Head of caudate nucleus (tissue), 42 donors: ENCODE measurements at regions of chr11 and their contacts with region 1.

Region 1: GRCh38 chr11:67482825-67483798 is at the start of gene AIP:
- DNase-seq: peak; percentile 92 to 99 (median 97)

Region 2: GRCh38 chr11:67401495-67402191 is 81.5 kb before region 1 on chr11 and contains the start of gene PPP1CA:
- intact Hi-C with region 1: loop called (anchors 5 kb)
- DNase-seq: peak; percentile 80 to 97 (median 94)

Region 3: DNA sequence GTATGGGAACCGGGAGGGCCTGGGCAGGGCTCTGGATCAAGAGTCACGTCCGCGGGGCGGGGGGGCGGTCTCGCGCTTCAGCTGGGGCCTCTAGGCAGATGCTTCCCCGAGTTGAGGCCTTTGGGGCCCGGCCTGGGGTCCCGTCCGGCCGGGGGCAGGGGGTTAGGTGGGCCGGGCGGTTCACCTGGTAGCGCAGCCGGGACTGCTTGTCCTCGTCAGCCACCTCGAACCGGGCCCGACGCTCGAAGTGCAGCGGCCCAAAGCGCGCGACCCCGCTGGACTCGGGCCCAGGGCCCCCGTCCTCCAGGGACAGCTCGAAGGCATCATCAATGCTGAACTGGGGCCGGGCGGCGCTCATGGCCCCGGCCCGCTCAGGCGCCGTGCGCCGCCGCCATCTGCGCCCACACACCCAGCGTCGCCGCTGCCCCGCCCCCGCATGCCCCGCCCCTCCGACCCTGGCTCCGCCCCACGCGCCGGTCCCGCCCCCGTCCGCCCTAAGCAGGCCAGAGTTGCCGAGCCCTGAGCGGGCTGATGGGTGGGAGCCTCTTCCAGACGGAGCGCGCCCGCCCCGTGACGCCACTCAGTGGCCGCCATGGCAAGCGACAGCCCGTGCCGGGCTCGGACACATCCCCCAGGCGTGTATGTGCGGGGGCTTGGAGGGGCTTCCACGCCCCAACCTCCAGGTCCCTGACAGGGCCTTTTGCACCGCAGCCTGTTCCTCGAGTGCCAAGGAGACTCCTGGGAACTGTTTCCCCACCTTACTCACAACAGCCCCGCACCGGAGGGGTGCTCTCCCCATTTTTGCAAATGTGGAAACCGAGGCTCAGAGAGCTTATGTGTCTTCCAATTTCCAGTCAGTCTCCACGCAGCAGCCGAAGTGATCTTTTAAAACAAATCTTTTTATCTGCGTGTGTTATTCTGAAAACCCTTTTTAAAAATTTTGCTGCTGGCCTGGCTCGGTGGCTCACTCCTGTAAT is 14.0 kb before region 1 on chr11 and contains the start of gene TMEM134:
- intact Hi-C with region 1: loop called (anchors 2 kb)
- DNase-seq: peak; percentile 85 to 99 (median 96)

Region 4: DNA sequence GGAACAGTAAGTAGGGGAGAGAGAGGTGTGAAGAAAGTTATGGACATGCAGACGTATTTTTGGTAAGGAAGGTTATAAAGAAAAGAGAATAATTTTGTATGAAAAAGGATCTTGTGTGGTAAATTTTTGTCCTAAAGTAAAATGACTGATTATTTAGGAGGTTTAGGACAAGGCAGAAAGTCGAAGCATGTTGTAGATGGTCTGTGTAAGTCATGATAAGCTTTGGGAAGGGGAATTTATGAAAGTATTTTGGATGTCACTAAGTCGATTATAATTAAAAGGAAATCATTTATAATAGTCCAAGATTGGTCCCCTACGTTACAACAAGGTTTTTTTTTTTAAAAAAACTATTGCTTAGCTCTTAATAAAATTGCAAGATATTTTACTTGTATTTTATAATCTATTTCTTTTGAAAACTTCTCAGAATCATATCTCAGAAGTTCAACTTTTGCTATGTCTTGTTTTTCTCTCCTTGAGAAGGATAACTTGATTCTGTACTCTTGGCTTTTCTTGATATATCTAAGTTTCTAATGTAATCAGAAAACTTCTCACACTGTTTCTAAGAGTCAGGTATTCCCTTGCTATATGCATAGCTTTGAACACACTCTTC is 51.1 kb after region 1 on chr11:
- intact Hi-C with region 1: no loop called
- DNase-seq: no peak

Region 5: DNA sequence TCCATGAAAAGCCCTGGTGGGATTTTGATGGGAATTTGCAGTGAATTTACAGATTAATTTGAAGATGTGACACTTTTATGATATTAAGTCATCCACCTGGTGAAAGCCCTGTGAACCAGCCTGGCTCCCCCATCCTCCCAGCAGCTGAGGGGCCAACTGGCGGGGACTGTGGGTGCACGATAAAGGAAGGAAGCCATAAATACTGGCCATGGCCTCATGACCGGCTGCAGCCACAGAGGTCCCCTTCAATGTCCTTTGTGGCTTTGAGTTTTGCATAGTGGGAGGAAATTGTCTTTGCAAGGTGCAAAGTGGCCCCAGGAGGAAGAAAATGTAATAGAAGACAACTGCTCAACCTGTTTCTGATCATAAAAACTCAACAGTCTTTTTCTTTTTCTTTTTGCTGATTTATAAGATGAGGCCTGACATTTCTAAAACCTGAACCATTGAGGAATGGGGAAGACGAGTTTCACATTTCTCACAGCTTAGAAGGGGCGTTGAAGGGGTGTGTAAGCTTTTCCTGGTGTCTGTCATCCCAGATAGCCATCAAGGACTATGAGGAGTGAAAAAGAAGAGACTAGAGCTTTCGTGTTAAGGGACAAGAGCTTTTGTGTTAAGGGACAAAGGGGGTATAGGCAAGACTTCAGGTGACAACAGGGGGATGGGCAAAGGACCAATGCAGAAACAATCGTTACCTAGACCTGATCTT is 117.4 kb after region 1 on chr11:
- intact Hi-C with region 1: no loop called
- DNase-seq: no peak